Heart right ventricle (tissue), 16 donors: ENCODE measurements at regions of chr4 and their contacts with region 1.

Region 1: GRCh38 chr4:54217642-54218495 is 11.2 kb upstream of the PDGFRA start:
- DNase-seq: peak; percentile 50 to 84
- ATAC-seq: peak; percentile 89 to 95 (median 91)
- H3K4me3 ChIP-seq: peak overlapping the region in 9 of 10 donors; percentile 3 to 52 (median 48)
- H3K27ac ChIP-seq: peak overlapping the region in 2 of 10 donors; percentile 7 to 67
- H3K4me1 ChIP-seq: peaks cover 0 to 19% (median 10%) of the 10 kb centered on the region in 9 donors
- H3K27me3 ChIP-seq: peaks cover 0 to 40% (median 29%) of the 10 kb centered on the region in 7 donors
- CTCF ChIP-seq: peak; percentile 84 to 97 (median 93)

Region 2: DNA sequence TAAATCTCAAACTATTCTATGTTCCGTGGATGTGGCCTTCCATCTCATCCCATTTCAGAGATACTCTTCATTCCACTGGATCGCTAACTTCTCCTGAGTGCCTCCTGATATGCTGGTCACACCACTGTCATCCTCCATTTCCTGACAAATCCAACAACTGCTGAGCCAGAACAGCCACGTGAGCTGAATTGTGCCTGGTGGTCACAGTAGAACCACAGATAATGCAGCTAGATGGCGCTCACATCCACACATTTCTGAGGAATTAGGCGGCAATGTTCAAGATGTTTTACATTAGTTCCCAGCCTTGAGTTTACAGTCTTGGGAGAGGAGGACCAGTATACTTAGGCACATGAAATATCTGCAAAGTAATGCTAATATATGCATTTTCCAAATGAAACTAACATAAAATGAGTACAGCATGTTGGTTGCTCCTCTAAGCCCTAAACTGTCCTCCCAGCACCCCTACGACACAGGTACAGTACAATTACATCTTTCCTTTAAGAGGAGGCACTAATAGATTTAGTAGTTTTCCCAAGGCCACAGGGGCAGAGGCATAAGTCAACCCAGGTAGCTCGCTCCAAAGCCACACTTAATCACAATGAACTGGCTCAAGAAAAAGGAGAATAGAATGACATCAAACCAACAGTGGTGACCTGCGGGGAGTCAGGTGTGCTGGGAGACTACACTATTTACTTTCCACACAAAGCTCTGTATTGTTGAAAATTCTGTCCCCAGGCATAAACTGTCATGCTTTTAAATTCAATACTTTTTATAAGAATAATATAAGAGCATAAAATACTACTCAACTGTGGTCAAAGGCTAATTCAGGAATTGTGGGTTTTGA is 287.7 kb before region 1 on chr4:
- intact Hi-C with region 1: loop called (anchors 1 to 5 kb)
- DNase-seq: peak; percentile 20 to 82
- ATAC-seq: peak; percentile 72 to 94 (median 92)
- H3K4me3 ChIP-seq: no peak overlapping the region
- H3K27ac ChIP-seq: peak overlapping the region in 1 of 10 donors; percentile 12
- H3K4me1 ChIP-seq: peaks cover 0 to 11% (median 0%) of the 10 kb centered on the region in 9 donors
- H3K27me3 ChIP-seq: peaks cover 0 to 11% (median 2%) of the 10 kb centered on the region in 7 donors
- CTCF ChIP-seq: peak; percentile 54 to 85 (median 78)

Region 3: GRCh38 chr4:54064295-54065111 is 153.4 kb before region 1 on chr4 and contains the start of gene CHIC2:
- intact Hi-C with region 1: loop called in 3 of 10 experiments (anchors 1 to 10 kb)
- DNase-seq: peak; percentile 95 to 97
- ATAC-seq: peak; percentile 87 to 95 (median 92)
- H3K4me3 ChIP-seq: peak within 1 kb of the TSS; percentile 67 to 100 (median 94)
- H3K27ac ChIP-seq: peak within 1 kb of the TSS; percentile 76 to 99 (median 95)
- H3K4me1 ChIP-seq: peaks cover 3 to 64% (median 60%) of the 10 kb centered on the region in 9 donors
- H3K27me3 ChIP-seq: no peaks in the 10 kb centered on the region
- CTCF ChIP-seq: no peak
- total RNA-seq, gene CHIC2: 6.0 to 12.6 (median 9.3) TPM

Region 4: DNA sequence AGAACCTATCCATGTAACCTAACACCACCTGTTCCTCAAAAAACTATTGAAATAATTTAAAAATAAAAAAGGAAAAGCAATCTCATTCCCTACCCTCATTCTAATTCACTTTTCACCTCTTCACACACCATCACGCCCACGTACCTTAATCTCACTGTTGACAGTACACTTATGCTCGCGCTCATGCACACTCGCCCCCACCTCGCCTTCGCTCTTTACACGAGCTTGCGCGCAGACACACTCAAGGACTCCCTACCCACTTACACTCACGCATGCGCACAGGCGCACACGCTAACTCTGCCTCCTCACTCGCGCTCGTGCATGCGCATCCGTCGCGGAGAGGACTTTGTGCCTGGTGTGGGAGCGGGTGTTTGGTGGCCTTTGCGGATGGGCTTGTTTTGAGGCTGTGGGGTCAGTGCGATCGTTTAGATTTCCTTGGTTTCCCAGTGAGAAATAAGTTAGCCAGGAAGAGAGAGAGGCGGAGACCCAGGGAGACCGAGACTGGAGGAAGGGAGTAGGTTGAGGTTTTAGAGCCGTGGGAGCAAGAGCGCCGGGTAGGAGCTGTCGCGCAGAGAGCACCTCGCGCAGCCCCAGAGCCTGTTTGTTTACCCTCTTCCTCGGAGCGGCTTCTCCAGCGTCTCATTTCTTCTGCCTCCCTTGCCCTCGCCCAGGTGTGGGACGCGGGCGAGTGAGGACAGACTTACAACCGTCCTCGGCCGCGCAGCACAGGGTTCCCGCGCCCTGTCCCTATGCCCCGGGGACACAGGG is 126.0 kb before region 1 on chr4:
- intact Hi-C with region 1: loop called in 1 of 10 experiments (anchors 10 kb)
- DNase-seq: peak; percentile 80 to 83
- ATAC-seq: peak; percentile 90 to 95 (median 94)
- H3K4me3 ChIP-seq: peak overlapping the region; percentile 16 to 56 (median 50)
- H3K27ac ChIP-seq: peak overlapping the region in 1 of 10 donors; percentile 39
- H3K4me1 ChIP-seq: peaks cover 2 to 26% (median 16%) of the 10 kb centered on the region in 9 donors
- H3K27me3 ChIP-seq: peaks cover 9 to 82% (median 59%) of the 10 kb centered on the region in 7 donors
- CTCF ChIP-seq: no peak